Activated CD4-positive, alpha-beta T cell treated with anti-CD3 and anti-CD28 coated beads, Interleukin-2, amount 10 ng/mL, durations not matched to agents 24 days and 14 days (primary cell): ENCODE measurements at regions of chr12 and their contacts with region 1.

Region 1: DNA sequence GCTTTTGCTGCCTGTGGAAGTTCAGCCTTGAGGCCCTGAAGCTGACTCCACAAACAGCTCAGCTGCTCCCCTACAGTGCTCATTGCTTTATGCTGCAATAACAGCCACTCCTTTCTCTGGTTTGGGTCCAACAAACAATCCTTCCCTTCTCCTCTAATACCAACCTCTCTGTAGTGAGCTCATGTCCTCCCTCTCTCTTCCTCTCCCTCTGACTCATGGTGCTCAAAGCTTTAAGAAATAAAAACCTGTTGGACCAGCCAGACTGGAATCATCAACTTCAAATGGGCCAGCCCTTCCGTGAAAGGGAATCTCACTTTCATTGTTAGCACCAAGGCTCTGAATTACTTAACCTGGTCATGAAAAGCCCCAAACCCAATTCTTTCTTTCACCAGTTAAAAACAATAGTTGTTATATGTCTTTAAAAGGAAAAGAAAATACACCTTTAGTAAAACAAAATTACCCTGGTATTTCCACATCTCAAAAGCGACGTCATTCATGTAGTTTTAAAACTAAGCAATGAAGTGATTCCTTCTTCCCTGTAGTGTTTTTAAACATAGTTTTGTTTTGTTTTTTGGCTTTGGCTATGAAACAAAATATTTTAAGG is 126.4 kb downstream of the DUSP6 start:
- DNase-seq: peak; percentile 75
- H3K4me3 Mint-ChIP-seq: peak overlapping the region; percentile 58
- H3K27ac Mint-ChIP-seq: peak overlapping the region; percentile 95
- H3K4me1 Mint-ChIP-seq: peaks cover 67% of the 10 kb centered on the region
- H3K27me3 Mint-ChIP-seq: no peaks in the 10 kb centered on the region

Region 2: GRCh38 chr12:89029961-89030360 is 195.9 kb before region 1 on chr12:
- intact Hi-C with region 1: no loop called
- DNase-seq: no peak
- H3K4me3 Mint-ChIP-seq: no peak overlapping the region
- H3K27ac Mint-ChIP-seq: no peak overlapping the region
- H3K4me1 Mint-ChIP-seq: peaks cover 16% of the 10 kb centered on the region
- H3K27me3 Mint-ChIP-seq: no peaks in the 10 kb centered on the region

Region 3: DNA sequence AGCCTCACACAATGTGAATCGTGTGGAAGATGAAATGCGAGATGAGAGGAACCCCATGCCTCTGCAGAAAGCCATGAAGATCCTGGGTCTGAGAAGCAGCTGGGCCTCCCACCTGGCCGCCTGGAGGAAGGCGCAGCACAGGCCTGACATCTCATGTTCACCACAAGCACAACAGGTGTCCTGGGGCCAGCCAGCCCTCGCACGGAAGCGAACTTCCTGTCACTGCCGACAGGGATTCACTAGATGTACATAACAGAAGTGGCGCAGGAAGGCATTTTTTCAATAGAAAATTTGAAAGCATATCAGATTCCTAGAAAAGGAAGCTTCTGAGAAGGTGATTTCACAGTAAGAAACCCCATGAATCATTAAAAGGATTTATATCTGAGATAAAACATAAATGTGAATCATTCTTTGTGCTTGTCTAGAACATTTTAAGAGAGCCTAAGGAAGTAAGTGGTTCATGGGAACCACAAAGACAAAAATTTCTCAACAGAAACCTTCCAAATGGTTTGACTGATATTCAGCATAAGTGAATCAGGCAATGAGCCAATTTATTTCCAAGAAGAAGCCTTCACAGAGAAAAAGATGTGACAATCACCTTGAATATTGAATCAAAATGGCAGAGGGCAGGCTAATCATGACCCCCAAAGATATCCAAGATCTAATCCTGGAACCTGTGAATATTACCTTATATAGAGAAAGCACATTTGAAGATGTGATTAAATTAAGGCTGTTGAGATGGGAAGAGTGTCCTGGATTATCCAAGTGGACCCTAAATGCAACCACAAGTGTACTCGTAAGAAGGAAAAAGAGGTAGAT is 185.6 kb before region 1 on chr12:
- intact Hi-C with region 1: loop called (anchors 1 kb)
- DNase-seq: peak; percentile 94
- H3K4me3 Mint-ChIP-seq: peak overlapping the region; percentile 72
- H3K27ac Mint-ChIP-seq: peak overlapping the region; percentile 93
- H3K4me1 Mint-ChIP-seq: peaks cover 58% of the 10 kb centered on the region
- H3K27me3 Mint-ChIP-seq: no peaks in the 10 kb centered on the region

Region 4: DNA sequence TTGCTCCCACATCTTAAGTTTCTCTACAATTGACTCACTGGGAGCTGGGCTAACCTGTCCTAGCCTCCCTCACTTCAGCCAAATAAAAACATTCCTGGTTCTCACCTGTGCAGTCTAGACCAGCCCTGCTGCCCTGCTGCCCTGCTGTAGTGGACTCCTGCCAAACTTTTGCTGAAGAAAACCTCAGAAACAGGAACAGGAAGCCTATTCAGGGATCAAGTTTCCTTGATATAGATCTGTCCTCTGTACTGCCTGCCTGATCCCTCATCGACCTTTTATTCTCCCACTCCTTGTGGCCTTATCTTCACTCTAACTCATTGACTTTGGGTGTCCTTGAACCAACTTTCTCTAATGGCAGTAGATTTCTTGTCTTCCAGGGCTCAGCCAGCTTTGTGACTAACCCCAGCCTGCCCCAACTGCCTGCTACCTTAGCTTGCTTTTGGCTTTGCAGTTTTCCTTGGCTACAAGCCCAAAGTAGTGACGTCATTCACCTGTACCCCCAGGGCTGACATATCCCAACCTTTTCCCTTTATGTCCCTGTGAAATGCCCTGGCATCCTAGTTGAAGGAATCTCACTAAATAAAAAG is 108.4 kb before region 1 on chr12:
- intact Hi-C with region 1: no loop called
- DNase-seq: no peak
- H3K4me3 Mint-ChIP-seq: no peak overlapping the region
- H3K27ac Mint-ChIP-seq: no peak overlapping the region
- H3K4me1 Mint-ChIP-seq: peaks cover 7% of the 10 kb centered on the region
- H3K27me3 Mint-ChIP-seq: peaks cover 2% of the 10 kb centered on the region

Region 5: GRCh38 chr12:89156340-89156739 is 69.6 kb before region 1 on chr12:
- intact Hi-C with region 1: no loop called
- DNase-seq: no peak
- H3K4me3 Mint-ChIP-seq: peak overlapping the region; percentile 34
- H3K27ac Mint-ChIP-seq: peak overlapping the region; percentile 74
- H3K4me1 Mint-ChIP-seq: peaks cover 27% of the 10 kb centered on the region
- H3K27me3 Mint-ChIP-seq: no peaks in the 10 kb centered on the region

Region 6: DNA sequence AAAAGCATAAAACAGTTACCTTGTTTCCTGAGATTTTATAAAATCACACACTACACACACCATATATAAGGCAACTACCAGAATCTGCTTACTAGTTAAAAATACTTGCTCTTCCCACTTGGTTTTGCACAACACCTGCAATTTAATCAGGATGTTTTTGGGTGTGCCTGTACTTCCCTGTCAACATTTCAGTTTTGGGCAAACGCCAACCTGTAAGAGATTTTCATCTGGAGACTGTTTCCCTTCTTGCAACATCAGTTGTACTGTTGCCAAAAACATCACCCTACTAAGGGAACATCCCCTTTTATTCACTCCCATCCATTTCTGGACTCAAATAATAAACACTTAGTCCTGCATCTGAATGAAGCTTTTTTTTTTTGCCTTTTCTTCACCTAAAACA is 45.9 kb before region 1 on chr12:
- intact Hi-C with region 1: loop called (anchors 1 kb)
- DNase-seq: no peak
- H3K4me3 Mint-ChIP-seq: peak overlapping the region; percentile 38
- H3K27ac Mint-ChIP-seq: peak overlapping the region; percentile 81
- H3K4me1 Mint-ChIP-seq: peaks cover 51% of the 10 kb centered on the region
- H3K27me3 Mint-ChIP-seq: no peaks in the 10 kb centered on the region

Region 7: GRCh38 chr12:89333564-89334252 is 107.8 kb after region 1 on chr12:
- intact Hi-C with region 1: loop called (anchors 5 kb)
- DNase-seq: peak; percentile 81
- H3K4me3 Mint-ChIP-seq: peak overlapping the region; percentile 67
- H3K27ac Mint-ChIP-seq: peak overlapping the region; percentile 87
- H3K4me1 Mint-ChIP-seq: peaks cover 28% of the 10 kb centered on the region
- H3K27me3 Mint-ChIP-seq: no peaks in the 10 kb centered on the region

Region 8: GRCh38 chr12:89494411-89495231 is 268.7 kb after region 1 on chr12:
- intact Hi-C with region 1: loop called (anchors 1 kb)
- DNase-seq: peak; percentile 72
- H3K4me3 Mint-ChIP-seq: peak overlapping the region; percentile 44
- H3K27ac Mint-ChIP-seq: peak overlapping the region; percentile 96
- H3K4me1 Mint-ChIP-seq: peaks cover 14% of the 10 kb centered on the region
- H3K27me3 Mint-ChIP-seq: no peaks in the 10 kb centered on the region